HCT116 (cell line): ENCODE measurements at regions of chr2 and their contacts with region 1.

Region 1: DNA sequence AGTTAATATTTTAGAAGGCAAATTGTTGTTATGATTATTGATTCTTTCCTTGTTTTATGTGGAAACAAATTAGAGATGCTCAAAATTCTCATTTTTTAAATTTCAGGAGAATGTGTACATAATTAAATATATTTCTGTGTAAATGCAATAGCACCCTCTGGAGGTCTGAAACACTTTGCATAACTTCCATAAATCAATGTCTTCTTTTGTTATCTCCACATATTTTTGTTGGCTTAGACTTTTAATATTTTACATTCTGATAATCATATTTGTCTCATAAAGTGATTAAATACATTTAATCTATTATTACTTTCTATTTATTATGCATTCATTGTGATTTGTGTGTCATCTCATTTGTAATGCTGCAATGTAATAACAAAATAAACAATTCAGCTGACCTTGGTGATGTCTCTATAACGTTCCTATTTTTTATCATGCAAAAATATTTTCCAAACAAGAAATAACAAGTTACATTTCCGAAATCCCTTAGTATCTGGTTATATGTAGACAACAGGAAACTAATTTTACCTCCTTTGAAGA is 201.8 kb upstream of the GALNT5 start:
- DNase-seq: peak; percentile 22
- ATAC-seq: no peak
- H3K4me3 ChIP-seq: no peak overlapping the region
- H3K27ac ChIP-seq: peak overlapping the region; percentile 40; the same call in 1 of the 2 replicates
- H3K4me1 ChIP-seq: peaks cover 10 to 28% of the 10 kb centered on the region in 2 experiments
- H3K27me3 ChIP-seq: no peaks in the 10 kb centered on the region
- CTCF ChIP-seq: peak; percentile 46 to 73 (median 46); a peak in 5 of 6 replicates
- POLR2A ChIP-seq: no peak
- RAD21 ChIP-seq: peak; percentile 82

Region 2: GRCh38 chr2:156072745-156073144 is 983.0 kb before region 1 on chr2:
- CTCF ChIA-PET with region 1: no interaction called
- POLR2A ChIA-PET with region 1: no interaction called
- RAD21 ChIA-PET with region 1: no interaction called
- intact Hi-C with region 1: loop called (anchors 5 kb)
- DNase-seq: no peak
- ATAC-seq: no peak
- H3K4me3 ChIP-seq: no peak overlapping the region
- H3K27ac ChIP-seq: no peak overlapping the region
- H3K4me1 ChIP-seq: no peaks in the 10 kb centered on the region; a peak in 1 of 4 replicates
- H3K27me3 ChIP-seq: no peaks in the 10 kb centered on the region
- CTCF ChIP-seq: no peak
- POLR2A ChIP-seq: no peak
- RAD21 ChIP-seq: no peak

Region 3: GRCh38 chr2:157194097-157194688 is 138.5 kb after region 1 on chr2:
- CTCF ChIA-PET with region 1: interaction called, 6 read pairs
- POLR2A ChIA-PET with region 1: no interaction called
- RAD21 ChIA-PET with region 1: interaction called in 1 of 2 experiments, 5 read pairs
- intact Hi-C with region 1: loop called (anchors 5 kb)
- DNase-seq: peak; percentile 49
- ATAC-seq: peak; percentile 80
- H3K4me3 ChIP-seq: no peak overlapping the region
- H3K27ac ChIP-seq: no peak overlapping the region
- H3K4me1 ChIP-seq: peaks cover 0 to 3% of the 10 kb centered on the region in 2 experiments; a peak in 1 of 4 replicates
- H3K27me3 ChIP-seq: no peaks in the 10 kb centered on the region
- CTCF ChIP-seq: peak; percentile 55 to 75 (median 58); a peak in 4 of 6 replicates
- POLR2A ChIP-seq: no peak
- RAD21 ChIP-seq: peak; percentile 90